GM18951 (cell line): ENCODE measurements at regions of chr3 and their contacts with region 1.

Region 1: DNA sequence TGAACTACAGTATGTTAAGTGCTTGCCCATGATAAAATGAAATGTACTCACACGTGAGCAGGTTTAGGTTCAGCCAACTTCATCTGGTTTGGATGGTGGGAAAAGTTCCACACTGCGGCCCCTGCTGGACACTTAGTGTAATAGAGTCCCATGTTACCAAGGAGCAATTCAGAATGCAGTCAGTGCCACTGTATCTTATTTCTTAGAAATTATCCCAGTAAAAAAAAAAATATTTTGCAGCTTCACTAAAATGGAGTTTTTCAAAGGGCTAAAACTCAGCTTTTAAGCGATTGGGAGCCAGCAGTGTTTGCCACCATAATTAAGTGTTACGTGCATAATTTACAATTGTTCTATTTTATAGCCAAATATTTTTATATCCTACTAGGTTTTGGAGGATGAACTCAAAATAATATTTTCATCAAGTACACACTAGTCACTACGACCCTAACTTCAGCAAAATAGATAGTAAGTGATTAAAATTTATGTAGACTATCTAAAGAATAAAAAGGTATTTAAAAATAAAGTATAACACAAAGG is 371.7 kb upstream of the GBE1 start:
- POLR2A ChIP-seq: no peak

Region 2: DNA sequence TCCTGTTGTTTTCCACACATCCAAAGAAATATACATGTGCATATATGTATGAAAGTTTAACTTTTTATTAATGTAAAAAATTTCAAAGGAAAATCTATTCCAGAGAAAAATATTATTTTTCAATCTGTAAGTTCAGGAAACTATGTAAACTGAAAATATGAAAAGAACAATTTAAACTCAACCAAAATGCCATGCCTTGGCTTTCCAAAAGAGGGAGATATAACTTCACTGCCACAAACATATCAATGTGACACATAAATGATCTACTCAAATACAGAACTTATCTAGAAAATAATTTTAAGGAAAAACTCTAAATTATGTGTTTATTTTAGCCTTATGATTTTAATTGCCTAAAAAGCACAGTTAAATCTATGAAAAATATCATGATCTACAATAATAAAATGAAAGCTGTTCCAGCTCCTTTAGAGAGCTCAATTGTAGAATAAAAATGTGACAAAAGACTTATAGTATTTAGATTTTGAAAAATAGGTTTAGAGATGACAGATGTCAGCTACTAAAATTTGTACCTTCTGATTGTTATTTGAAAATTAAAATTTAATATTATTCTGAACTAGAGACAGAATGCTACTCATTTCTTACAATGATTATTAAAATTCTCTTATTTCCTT is 466.5 kb before region 1 on chr3:
- in situ Hi-C with region 1: loop called (anchors 25 kb)
- POLR2A ChIP-seq: no peak

Region 3: DNA sequence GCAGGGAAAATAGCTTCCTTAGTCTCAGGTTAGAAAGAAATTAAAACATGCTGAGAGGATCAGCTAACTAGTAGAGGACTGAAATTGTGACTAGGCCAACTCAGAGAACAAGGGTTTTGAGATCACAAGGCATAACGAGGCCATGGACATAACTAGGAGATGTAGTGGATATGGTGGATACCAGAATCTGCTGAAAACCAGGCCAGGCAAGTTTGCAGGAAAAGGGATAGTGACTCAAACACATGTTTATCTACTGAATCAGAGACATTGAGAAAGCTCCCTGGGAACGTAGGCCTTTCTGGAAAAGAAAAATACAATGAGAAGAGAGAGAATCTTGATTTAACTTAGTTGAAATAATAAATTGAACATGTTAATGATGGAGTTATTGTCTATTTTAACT is 45.2 kb before region 1 on chr3:
- in situ Hi-C with region 1: no loop called
- POLR2A ChIP-seq: no peak